K562 (cell line): ENCODE measurements at regions of chr17 and their contacts with region 1.

Region 1: DNA sequence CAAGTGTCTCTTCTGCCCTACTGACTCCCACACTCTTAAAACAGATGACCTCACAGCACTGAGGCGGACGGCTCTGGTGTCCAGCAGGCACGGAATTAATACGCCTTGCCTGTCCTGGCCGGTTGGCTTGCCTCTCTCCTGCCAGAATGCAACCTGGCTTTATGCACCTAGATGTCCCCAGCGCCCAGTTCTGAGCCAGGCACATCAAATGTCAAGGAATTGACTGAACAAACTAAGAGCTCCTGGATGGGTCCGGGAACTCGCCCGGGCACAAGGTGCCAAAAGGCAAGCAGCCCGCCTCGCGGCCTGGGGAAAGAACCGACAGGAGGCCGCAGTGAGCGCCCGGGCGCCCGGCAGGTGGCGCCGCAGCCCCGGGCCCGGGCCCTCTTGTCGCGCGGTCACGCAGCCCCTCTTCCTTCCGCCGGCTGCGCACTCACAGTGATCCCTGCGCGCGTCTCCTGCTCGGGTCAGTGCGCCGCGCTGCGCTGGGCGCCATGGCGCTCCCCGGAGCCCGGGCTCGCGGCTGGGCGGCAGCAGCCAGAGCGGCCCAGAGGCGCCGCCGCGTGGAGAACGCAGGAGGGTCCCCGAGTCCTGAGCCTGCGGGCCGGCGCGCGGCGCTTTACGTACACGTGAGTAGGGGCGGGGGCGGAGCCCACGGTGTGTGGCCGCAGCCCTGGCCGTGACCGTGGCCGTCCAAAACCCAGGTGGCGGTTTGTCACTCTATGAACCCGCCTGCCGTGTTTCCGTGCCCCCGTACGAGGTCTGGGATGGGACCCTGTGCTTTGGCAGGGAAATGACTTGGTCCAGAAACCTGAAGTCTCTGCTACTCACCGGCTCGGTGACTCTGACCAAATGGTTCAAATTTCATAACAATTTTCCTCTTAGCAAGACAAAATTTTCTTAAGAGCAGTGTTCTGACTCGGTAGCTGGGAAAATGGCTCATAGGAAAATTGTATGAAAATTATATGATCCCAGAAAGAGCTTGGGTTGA is at the start of gene RSAD1:
- DNase-seq: peak; percentile 89 to 93 (median 90)
- ATAC-seq: peak; percentile 93
- H3K4me3 ChIP-seq: peak within 1 kb of the TSS; percentile 80
- H3K27ac ChIP-seq: peak within 1 kb of the TSS; percentile 90
- H3K4me1 ChIP-seq: peaks cover 11 to 34% of the 10 kb centered on the region in 2 experiments; a peak in 4 of 5 replicates
- H3K27me3 ChIP-seq: peaks cover 4 to 9% of the 10 kb centered on the region in 2 experiments; a peak in 2 of 5 replicates
- CTCF ChIP-seq: peak; percentile 76 to 96 (median 82)
- EP300 ChIP-seq: peak; percentile 13; the same call in 1 of the 2 replicates
- POLR2A ChIP-seq: peak; percentile 70; the same call in 1 of the 2 replicates
- RAD21 ChIP-seq: peak; percentile 83 to 86
- polyA plus RNA-seq, gene RSAD1: 4.5 to 5.2 TPM

Region 2: GRCh38 chr17:50213026-50214022 is 265.4 kb before region 1 on chr17:
- CTCF ChIA-PET with region 1: no interaction called
- POLR2A ChIA-PET with region 1: no interaction called
- in situ Hi-C with region 1: no loop called
- intact Hi-C with region 1: loop called (anchors 2 kb)
- DNase-seq: peak; percentile 47 to 51 (median 49)
- ATAC-seq: peak; percentile 30; the same call in 2 of the 3 replicates
- H3K4me3 ChIP-seq: no peak overlapping the region
- H3K27ac ChIP-seq: no peak overlapping the region
- H3K4me1 ChIP-seq: peaks cover 42 to 45% of the 10 kb centered on the region in 2 experiments
- H3K27me3 ChIP-seq: no peaks in the 10 kb centered on the region
- CTCF ChIP-seq: peak; percentile 30 to 32 (median 30); a peak in 3 of 6 replicates
- EP300 ChIP-seq: no peak
- POLR2A ChIP-seq: no peak
- RAD21 ChIP-seq: peak in 1 of 2 experiments; percentile 13; a peak in 1 of 4 replicates

Region 3: DNA sequence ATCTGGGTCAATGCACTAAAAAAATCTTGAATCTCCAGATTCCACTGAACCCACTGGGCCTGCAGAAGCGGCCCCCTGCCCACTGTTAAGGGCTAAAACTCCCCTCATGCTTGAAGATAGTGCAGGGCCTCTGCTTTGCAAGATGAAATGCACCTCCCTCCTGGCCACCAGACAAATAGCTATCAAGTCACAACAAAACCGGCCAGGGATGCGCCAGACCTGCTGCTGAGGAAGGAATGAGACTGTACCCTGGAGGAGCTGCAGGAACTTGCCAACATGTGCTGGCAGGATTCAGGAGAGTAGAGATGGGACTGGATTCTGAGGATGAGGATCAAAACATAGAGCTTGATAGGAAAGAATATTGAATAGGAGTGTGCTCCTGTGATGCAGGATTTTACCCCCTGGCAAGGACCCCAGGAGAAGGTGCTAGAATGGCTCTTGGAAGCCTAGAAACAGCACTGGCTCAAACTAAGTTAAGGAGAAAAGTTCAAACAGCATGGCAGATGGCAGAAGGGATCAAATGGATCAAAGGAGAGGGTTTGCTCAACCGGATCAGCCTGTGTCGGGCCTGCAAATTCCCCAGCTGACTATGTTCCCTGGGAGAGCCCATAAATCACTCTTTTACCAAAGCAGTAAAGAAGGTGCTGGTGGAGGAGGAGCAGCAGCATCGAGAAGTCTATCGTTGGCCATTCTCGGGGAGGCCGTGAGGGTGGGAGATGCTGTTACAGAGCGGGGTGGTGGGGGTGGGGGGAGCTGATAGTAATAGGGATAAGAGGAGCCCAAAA is 160.0 kb before region 1 on chr17:
- CTCF ChIA-PET with region 1: no interaction called
- POLR2A ChIA-PET with region 1: no interaction called
- in situ Hi-C with region 1: no loop called
- intact Hi-C with region 1: no loop called
- DNase-seq: peak in 1 of 4 experiments; percentile 20
- ATAC-seq: peak; percentile 52
- H3K4me3 ChIP-seq: no peak overlapping the region
- H3K27ac ChIP-seq: no peak overlapping the region
- H3K4me1 ChIP-seq: no peaks in the 10 kb centered on the region; a peak in 1 of 5 replicates
- H3K27me3 ChIP-seq: peaks cover 16 to 24% of the 10 kb centered on the region in 2 experiments; a peak in 4 of 5 replicates
- CTCF ChIP-seq: no peak
- EP300 ChIP-seq: no peak
- POLR2A ChIP-seq: no peak
- RAD21 ChIP-seq: no peak

Region 4: GRCh38 chr17:50361561-50362480 is 116.9 kb before region 1 on chr17:
- CTCF ChIA-PET with region 1: interaction called, 17 read pairs
- POLR2A ChIA-PET with region 1: interaction called, 3 read pairs
- in situ Hi-C with region 1: no loop called
- intact Hi-C with region 1: loop called (anchors 1 kb)
- DNase-seq: peak; percentile 86 to 95 (median 91)
- ATAC-seq: peak; percentile 89
- H3K4me3 ChIP-seq: no peak overlapping the region
- H3K27ac ChIP-seq: peak overlapping the region; percentile 62
- H3K4me1 ChIP-seq: peaks cover 17 to 33% of the 10 kb centered on the region in 2 experiments
- H3K27me3 ChIP-seq: no peaks in the 10 kb centered on the region
- CTCF ChIP-seq: peak; percentile 83 to 93 (median 89)
- EP300 ChIP-seq: peak; percentile 75; the same call in 1 of the 2 replicates
- POLR2A ChIP-seq: 0 out of 2 replicates have a peak, but pooled peaks have one; percentile 36
- RAD21 ChIP-seq: peak; percentile 70 to 72

Region 5: GRCh38 chr17:50425682-50426471 is 52.8 kb before region 1 on chr17 and contains the start of gene ACSF2:
- CTCF ChIA-PET with region 1: no interaction called
- POLR2A ChIA-PET with region 1: no interaction called
- in situ Hi-C with region 1: no loop called
- intact Hi-C with region 1: loop called (anchors 2 kb)
- DNase-seq: peak; percentile 78 to 93 (median 90)
- ATAC-seq: peak; percentile 90
- H3K4me3 ChIP-seq: peak within 1 kb of the TSS; percentile 64
- H3K27ac ChIP-seq: peak within 1 kb of the TSS; percentile 26; the same call in 2 of the 3 replicates
- H3K4me1 ChIP-seq: peaks cover 34 to 36% of the 10 kb centered on the region in 2 experiments
- H3K27me3 ChIP-seq: no peaks in the 10 kb centered on the region
- CTCF ChIP-seq: no peak
- EP300 ChIP-seq: no peak
- POLR2A ChIP-seq: no peak; the same call in 1 of the 2 replicates
- RAD21 ChIP-seq: no peak
- polyA plus RNA-seq, gene ACSF2: 0.89 to 1.5 TPM

Region 6: DNA sequence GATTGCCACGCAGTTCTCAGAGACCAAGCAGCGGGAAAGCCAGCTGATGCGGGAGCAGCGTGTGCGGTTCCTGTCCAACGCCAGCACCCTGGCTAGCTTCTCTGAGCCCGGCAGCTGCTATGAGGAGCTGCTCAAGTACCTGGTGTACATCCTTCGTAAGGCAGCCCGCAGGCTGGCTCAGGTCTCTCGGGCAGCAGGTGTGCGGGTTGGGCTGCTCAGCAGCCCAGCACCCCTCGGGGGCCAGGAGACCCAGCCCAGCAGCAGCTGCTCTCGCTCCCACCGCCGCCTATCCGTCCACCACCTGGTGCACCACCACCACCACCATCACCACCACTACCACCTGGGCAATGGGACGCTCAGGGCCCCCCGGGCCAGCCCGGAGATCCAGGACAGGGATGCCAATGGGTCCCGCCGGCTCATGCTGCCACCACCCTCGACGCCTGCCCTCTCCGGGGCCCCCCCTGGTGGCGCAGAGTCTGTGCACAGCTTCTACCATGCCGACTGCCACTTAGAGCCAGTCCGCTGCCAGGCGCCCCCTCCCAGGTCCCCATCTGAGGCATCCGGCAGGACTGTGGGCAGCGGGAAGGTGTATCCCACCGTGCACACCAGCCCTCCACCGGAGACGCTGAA is 97.0 kb after region 1 on chr17:
- CTCF ChIA-PET with region 1: no interaction called
- POLR2A ChIA-PET with region 1: no interaction called
- in situ Hi-C with region 1: no loop called
- intact Hi-C with region 1: no loop called
- DNase-seq: no peak
- ATAC-seq: no peak
- H3K4me3 ChIP-seq: no peak overlapping the region
- H3K27ac ChIP-seq: no peak overlapping the region
- H3K4me1 ChIP-seq: peaks cover 14 to 32% of the 10 kb centered on the region in 2 experiments; a peak in 4 of 5 replicates
- H3K27me3 ChIP-seq: peaks cover 12 to 82% of the 10 kb centered on the region in 2 experiments; a peak in 4 of 5 replicates
- CTCF ChIP-seq: 0 out of 6 replicates have a peak, but pooled peaks of 1 of the 3 experiments have one; percentile 25
- EP300 ChIP-seq: no peak
- POLR2A ChIP-seq: no peak
- RAD21 ChIP-seq: no peak

Region 7: DNA sequence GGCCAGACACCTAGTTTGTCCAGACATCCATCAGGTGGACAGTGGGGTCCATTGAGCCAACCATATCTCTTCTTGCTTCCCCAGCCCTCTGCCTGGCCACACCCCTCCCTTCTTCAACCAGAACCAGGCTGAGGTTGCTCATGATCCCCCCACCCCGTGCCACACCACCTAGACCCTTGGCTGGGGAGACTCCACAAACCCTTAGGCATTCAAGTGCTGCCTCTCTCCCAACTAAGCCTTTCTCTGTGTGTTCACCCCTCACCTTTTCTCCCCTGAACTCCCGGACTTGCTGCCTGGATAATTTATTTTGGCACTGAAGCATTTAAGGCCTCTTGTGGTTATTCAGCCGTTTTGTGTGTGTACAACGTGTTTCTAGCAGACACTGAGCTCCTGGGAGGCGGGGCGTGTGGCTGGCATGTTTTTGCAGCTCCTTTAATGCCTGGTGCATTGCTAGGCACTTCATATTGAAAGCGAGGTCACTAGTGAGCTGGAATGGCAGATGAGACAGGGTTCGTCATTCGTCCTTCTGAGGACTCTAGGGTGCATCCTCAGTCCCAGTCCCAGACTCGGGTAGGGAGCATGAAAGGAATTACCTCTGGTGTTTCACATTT is 110.5 kb after region 1 on chr17:
- CTCF ChIA-PET with region 1: no interaction called
- POLR2A ChIA-PET with region 1: no interaction called
- in situ Hi-C with region 1: no loop called
- intact Hi-C with region 1: no loop called
- DNase-seq: no peak
- ATAC-seq: no peak
- H3K4me3 ChIP-seq: no peak overlapping the region
- H3K27ac ChIP-seq: no peak overlapping the region
- H3K4me1 ChIP-seq: peaks cover 0 to 15% of the 10 kb centered on the region in 2 experiments; a peak in 2 of 5 replicates
- H3K27me3 ChIP-seq: peaks cover 38 to 91% of the 10 kb centered on the region in 2 experiments; a peak in 4 of 5 replicates
- CTCF ChIP-seq: no peak
- EP300 ChIP-seq: no peak
- POLR2A ChIP-seq: no peak
- RAD21 ChIP-seq: no peak

Region 8: DNA sequence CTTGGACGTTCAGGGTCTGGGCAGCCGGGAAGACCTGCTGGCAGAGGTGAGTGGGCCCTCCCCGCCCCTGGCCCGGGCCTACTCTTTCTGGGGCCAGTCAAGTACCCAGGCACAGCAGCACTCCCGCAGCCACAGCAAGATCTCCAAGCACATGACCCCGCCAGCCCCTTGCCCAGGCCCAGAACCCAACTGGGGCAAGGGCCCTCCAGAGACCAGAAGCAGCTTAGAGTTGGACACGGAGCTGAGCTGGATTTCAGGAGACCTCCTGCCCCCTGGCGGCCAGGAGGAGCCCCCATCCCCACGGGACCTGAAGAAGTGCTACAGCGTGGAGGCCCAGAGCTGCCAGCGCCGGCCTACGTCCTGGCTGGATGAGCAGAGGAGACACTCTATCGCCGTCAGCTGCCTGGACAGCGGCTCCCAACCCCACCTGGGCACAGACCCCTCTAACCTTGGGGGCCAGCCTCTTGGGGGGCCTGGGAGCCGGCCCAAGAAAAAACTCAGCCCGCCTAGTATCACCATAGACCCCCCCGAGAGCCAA is 147.4 kb after region 1 on chr17:
- CTCF ChIA-PET with region 1: interaction called, 3 read pairs
- POLR2A ChIA-PET with region 1: no interaction called
- in situ Hi-C with region 1: no loop called
- intact Hi-C with region 1: loop called (anchors 1 kb)
- DNase-seq: peak; percentile 77 to 87 (median 80)
- ATAC-seq: peak; percentile 96
- H3K4me3 ChIP-seq: no peak overlapping the region
- H3K27ac ChIP-seq: no peak overlapping the region
- H3K4me1 ChIP-seq: peaks cover 7 to 27% of the 10 kb centered on the region in 2 experiments; a peak in 4 of 5 replicates
- H3K27me3 ChIP-seq: peaks cover 18 to 37% of the 10 kb centered on the region in 2 experiments
- CTCF ChIP-seq: peak; percentile 81 to 91 (median 86)
- EP300 ChIP-seq: no peak
- POLR2A ChIP-seq: no peak
- RAD21 ChIP-seq: peak; percentile 80 to 86

Region 9: DNA sequence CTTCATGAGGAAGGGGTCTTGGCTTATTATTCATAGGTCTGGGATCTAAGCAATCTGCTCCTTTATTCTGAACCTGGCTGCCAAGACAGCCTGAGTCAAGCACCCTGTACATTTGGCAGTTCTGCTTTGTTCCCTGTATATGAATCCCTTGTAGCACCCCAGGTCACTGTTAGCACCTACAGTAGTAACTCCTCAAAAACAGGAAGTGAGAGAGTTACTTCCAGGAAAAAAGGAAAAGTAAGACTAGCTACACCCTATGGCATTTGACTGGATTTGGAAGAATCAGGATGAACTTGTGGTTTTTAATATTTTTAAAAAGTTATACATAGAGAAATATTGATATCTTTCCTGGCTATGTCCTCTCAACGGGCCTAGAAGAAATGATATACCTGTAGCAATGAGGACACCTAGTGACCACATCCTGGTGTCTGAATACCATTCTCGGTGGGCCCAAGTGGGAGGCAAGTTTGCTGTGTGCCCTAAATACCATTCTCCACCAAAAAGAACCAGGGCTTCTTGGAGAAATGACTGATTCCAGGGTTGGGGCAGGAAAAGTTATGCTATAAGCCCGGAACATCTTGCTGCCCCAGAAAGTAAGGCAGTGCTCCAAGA is 219.1 kb after region 1 on chr17:
- CTCF ChIA-PET with region 1: interaction called, 4 read pairs
- POLR2A ChIA-PET with region 1: no interaction called
- in situ Hi-C with region 1: no loop called
- intact Hi-C with region 1: loop called (anchors 5 kb)
- DNase-seq: no peak
- ATAC-seq: no peak
- H3K4me3 ChIP-seq: no peak overlapping the region
- H3K27ac ChIP-seq: no peak overlapping the region
- H3K4me1 ChIP-seq: no peaks in the 10 kb centered on the region
- H3K27me3 ChIP-seq: no peaks in the 10 kb centered on the region
- CTCF ChIP-seq: peak in 2 of 3 experiments; percentile 11 to 16; a peak in 1 of 6 replicates
- EP300 ChIP-seq: no peak
- POLR2A ChIP-seq: no peak
- RAD21 ChIP-seq: 0 out of 4 replicates have a peak, but pooled peaks of 1 of the 2 experiments have one; percentile 2

Region 10: DNA sequence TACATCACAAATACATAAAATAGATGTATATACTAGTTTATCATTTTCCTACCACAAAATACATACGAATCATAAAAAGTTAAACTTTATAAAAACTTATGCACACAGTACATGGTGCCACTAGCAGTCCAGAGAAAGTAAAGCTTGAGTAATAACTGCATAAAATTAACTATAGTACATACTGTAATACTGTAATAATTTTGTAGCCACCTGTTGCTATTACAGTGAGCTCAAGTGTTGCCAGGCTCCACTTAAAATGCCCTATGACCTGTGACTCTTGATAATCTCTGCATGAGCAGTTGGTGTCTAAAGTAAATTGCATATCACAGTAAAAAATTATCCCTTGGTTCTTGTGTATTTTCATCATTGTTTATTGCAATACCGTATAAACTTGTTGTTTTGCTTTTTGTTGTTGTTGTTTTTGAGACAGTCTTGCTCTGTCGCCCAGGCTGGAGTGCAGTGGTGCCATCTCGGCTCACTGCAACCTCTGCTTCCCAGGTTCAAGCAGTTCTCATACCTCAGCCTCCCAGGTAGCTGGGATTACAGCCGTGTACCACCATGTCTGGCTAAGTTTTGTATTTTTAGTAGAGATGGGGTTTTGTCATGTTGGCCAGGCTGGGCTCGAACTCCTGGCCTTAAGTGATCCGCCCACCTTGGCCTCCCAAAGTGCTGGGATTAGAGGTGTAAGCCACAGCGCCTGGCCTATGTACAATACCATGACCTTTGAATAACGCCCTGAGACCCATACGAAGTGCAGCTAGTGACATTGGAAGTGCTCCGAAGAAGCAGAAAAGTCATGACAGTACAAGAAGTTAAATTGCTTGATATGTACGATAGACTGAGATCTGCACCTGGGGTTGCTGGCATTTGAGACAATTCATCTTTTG is 247.3 kb after region 1 on chr17:
- CTCF ChIA-PET with region 1: no interaction called
- POLR2A ChIA-PET with region 1: no interaction called
- in situ Hi-C with region 1: no loop called
- intact Hi-C with region 1: no loop called
- DNase-seq: no peak
- ATAC-seq: no peak
- H3K4me3 ChIP-seq: no peak overlapping the region
- H3K27ac ChIP-seq: no peak overlapping the region
- H3K4me1 ChIP-seq: peaks cover 13 to 25% of the 10 kb centered on the region in 2 experiments; a peak in 4 of 5 replicates
- H3K27me3 ChIP-seq: no peaks in the 10 kb centered on the region
- CTCF ChIP-seq: no peak
- EP300 ChIP-seq: no peak
- POLR2A ChIP-seq: no peak
- RAD21 ChIP-seq: no peak